ENCODE measurements at regions of chr19 and their contacts with region 1.

Region 1: GRCh38 chr19:45523642-45524256 is 16.5 kb downstream of the VASP start:
- DNase-seq: peak; percentile 74 to 86 (median 81)
- H3K4me3 ChIP-seq: no peak overlapping the region
- H3K27ac ChIP-seq: no peak overlapping the region
- H3K4me1 ChIP-seq: peaks cover 2% of the 10 kb centered on the region
- H3K27me3 ChIP-seq: no peaks in the 10 kb centered on the region
- CTCF ChIP-seq: peak; percentile 86 to 92 (median 91)
- EP300 ChIP-seq: no peak
- POLR2A ChIP-seq: no peak

Region 2: GRCh38 chr19:45276284-45276687 is 247.5 kb before region 1 on chr19:
- intact Hi-C with region 1: no loop called
- DNase-seq: peak; percentile 42 to 78 (median 67)
- H3K4me3 ChIP-seq: no peak overlapping the region
- H3K27ac ChIP-seq: peak overlapping the region in 1 of 2 donors; percentile 55
- H3K4me1 ChIP-seq: peaks cover 3% of the 10 kb centered on the region
- H3K27me3 ChIP-seq: no peaks in the 10 kb centered on the region
- CTCF ChIP-seq: no peak
- EP300 ChIP-seq: no peak
- POLR2A ChIP-seq: no peak

Region 3: DNA sequence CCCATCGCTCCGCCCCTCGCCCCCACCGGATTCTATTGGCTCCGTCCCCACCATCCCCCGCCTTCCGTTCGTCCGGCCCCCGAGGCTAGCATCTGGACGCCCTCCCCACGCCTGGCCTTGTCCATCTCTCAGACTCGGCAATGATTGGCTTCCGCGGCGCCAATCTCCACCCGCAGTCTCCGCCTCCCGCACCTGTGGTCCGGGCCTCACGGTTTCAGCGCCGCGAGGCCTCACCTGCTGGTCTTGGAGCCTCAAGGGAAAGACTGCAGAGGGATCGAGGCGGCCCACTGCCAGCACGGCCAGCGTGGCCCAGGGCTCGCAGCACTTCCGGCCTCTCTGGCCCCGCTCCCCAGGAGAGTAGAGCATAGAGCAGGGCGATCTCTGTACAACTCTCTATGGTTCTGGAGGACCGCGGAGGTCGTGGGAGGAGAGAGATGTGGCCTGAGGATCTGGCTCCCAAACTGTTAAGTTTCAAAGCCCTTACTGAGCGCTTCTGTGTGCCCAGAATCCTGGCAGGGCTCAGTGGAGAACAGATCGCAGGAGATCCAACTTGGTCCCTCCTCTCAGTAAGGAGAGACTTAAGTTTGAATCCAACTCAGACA is 100.1 kb before region 1 on chr19 and contains the start of gene ERCC1:
- intact Hi-C with region 1: no loop called
- DNase-seq: peak in 4 of 5 donors; percentile 96 to 98 (median 96)
- H3K4me3 ChIP-seq: peak within 1 kb of the TSS; percentile 63
- H3K27ac ChIP-seq: peak within 1 kb of the TSS; percentile 42 to 87
- H3K4me1 ChIP-seq: peaks cover 10% of the 10 kb centered on the region
- H3K27me3 ChIP-seq: no peaks in the 10 kb centered on the region
- CTCF ChIP-seq: no peak
- EP300 ChIP-seq: no peak
- POLR2A ChIP-seq: peak; percentile 69
- total RNA-seq, gene ERCC1: 70.7 to 98.6 (median 83.9) TPM

Region 4: DNA sequence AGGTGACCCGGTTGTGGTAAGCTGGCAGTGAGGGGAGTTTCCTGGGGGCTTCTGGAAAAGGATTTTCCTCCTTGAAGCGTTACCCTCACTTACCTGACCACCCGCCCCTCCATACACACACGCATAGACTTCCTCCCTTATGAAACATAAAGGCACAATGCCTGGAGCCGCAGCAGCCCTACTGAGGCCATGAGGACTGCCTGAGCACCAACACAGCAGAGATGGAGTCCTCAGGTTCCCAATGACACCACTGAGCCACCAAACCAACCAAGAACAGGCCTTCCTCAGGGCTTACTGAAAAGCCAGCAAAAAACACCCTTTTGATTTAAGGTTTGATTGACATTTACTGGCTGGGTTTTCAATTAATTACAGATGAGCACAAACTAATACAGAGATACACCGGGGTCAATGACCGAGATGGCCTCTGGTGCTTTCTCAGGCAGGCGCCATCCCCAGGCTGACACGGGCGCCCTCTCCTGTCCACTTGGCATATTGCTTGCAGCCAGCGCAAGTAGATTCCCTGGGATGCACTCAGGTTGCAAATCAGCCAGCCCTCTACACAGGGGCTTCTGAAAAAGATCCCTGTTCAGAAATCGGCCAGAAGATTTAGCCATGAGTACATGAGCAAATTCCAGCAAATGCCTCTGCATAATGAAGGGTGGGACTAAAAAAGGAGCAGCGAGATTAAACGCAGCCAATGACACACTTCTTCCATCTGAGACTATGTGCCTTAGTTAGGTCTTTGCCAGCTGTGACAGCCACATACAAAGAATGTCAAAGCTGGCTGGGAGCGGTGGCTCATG is 46.1 kb after region 1 on chr19:
- intact Hi-C with region 1: loop called in 1 of 4 experiments (anchors 10 kb)
- DNase-seq: no peak
- H3K4me3 ChIP-seq: no peak overlapping the region
- H3K27ac ChIP-seq: no peak overlapping the region
- H3K4me1 ChIP-seq: no peaks in the 10 kb centered on the region
- H3K27me3 ChIP-seq: no peaks in the 10 kb centered on the region
- CTCF ChIP-seq: no peak
- EP300 ChIP-seq: no peak
- POLR2A ChIP-seq: no peak

Region 5: DNA sequence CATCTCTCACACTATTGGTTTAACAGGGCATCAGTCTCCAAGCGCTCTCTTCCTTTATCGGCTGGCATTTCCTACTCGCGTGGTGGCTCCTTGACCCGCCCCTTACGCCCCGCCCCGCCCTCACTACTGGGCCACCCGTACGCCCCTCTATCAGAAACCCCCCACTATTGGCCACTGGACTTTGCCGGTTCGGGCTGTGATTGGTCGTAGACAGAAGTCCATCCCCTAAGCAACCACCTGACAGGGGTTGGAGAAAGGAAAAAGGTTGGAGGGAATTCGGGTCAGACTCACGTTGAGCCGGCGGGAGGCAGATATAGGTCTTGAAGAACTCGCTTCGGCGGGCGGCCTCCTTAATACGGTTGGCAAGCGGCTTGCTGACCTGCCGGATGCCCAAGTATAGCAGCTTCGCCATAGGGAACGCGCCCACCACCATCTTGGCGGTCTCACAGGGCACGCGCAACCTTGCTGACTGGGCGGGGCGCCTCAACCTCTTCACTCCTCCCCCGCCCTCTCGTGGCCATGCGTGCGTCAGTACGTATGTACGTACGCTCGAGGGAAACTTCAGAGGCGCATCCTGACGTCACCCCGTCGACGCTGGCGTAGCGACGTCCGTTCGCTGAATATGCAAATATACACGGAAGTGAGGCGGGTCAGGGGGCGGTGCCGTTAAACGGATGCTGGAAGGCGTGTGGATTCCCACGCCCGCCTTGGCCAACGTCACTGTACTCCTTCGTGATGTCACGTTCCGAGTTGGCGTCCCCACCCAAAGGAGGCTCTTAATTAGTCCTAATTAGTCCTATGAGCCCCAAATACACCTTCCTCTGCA is 60.8 kb after region 1 on chr19 and contains the start of gene OPA3:
- intact Hi-C with region 1: loop called in 2 of 4 experiments (anchors 10 kb)
- DNase-seq: peak; percentile 99 to 100 (median 100)
- H3K4me3 ChIP-seq: peak within 1 kb of the TSS; percentile 79
- H3K27ac ChIP-seq: peak within 1 kb of the TSS; percentile 93 to 100
- H3K4me1 ChIP-seq: peaks cover 4% of the 10 kb centered on the region
- H3K27me3 ChIP-seq: no peaks in the 10 kb centered on the region
- CTCF ChIP-seq: peak in 2 of 3 donors; percentile 7 to 43
- EP300 ChIP-seq: peak; percentile 98
- POLR2A ChIP-seq: peak; percentile 82
- total RNA-seq, gene OPA3: 2.0 to 16.6 (median 12.3) TPM

Region 6: GRCh38 chr19:45643024-45643926 is 119.5 kb after region 1 on chr19:
- intact Hi-C with region 1: loop called in 3 of 4 experiments (anchors 2 to 5 kb)
- DNase-seq: peak; percentile 65 to 89 (median 79)
- H3K4me3 ChIP-seq: no peak overlapping the region
- H3K27ac ChIP-seq: no peak overlapping the region
- H3K4me1 ChIP-seq: peaks cover 4% of the 10 kb centered on the region
- H3K27me3 ChIP-seq: peaks cover 3% of the 10 kb centered on the region
- CTCF ChIP-seq: peak; percentile 84 to 94 (median 89)
- EP300 ChIP-seq: no peak
- POLR2A ChIP-seq: no peak

Region 7: DNA sequence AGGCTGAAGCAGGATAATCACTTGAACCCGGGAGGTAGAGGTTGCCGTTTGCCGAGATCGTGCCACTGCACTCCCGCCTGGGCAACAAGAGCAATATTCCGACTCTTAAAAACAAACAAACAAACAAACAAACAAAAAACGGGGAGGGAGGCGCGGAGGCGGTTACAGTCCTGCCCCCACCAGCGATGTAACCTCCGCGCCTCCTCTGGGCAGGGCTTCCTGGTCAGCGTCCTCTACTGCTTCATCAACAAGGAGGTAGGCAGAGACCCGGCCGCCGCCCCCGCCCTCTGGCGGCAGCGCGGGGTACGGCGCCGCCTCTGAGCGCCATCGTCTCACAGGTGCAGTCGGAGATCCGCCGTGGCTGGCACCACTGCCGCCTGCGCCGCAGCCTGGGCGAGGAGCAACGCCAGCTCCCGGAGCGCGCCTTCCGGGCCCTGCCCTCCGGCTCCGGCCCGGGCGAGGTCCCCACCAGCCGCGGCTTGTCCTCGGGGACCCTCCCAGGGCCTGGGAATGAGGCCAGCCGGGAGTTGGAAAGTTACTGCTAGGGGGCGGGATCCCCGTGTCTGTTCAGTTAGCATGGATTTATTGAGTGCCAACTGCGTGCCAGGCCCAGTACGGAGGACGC is 157.8 kb after region 1 on chr19:
- intact Hi-C with region 1: loop called in 1 of 4 experiments (anchors 5 kb)
- DNase-seq: peak; percentile 71 to 85 (median 81)
- H3K4me3 ChIP-seq: peak overlapping the region; percentile 32
- H3K27ac ChIP-seq: peak overlapping the region; percentile 7 to 19
- H3K4me1 ChIP-seq: peaks cover 3% of the 10 kb centered on the region
- H3K27me3 ChIP-seq: peaks cover 7% of the 10 kb centered on the region
- CTCF ChIP-seq: peak; percentile 92 to 95 (median 93)
- EP300 ChIP-seq: no peak
- POLR2A ChIP-seq: no peak

Region 8: DNA sequence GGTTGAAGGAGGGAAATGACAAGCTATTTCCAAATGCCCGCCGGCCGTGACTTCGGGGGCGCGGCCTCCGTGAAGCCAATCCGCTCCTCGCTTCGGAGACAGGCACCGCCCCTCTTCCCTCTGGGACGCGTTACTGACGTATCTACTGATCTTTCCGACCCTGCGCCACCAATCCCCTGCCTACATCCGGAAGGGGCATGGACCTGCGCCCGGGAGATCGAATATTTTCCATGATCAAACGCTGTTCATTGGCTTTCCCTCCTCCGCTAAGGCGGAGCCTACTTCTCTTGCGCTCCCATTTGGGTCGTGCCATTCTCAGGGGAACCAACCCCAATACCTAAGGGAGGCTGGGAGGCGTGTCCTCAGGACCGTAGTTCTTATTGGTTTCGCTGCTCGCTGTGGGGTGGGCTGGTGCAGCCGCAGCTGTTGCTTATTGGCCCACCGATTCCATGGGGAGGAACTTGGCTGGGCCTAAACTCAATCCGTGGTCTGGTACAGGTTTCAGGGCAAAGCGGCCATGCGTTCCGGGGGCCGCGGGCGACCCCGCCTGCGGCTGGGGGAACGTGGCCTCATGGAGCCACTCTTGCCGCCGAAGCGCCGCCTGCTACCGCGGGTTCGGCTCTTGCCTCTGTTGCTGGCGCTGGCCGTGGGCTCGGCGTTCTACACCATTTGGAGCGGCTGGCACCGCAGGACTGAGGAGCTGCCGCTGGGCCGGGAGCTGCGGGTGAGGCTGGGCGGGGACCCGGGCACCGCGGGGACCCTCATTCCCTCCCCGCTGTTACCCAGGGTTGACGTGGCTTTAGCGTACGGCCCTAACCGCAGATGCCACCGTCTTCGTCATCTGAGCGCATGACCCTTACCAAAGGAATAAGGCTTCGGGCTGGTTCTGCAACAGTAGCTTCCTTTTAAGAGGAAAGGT is 168.7 kb after region 1 on chr19 and contains the start of gene QPCTL:
- intact Hi-C with region 1: loop called in 1 of 4 experiments (anchors 5 kb)
- DNase-seq: peak; percentile 90 to 95 (median 93)
- H3K4me3 ChIP-seq: peak within 1 kb of the TSS; percentile 57
- H3K27ac ChIP-seq: peak within 1 kb of the TSS; percentile 7 to 88
- H3K4me1 ChIP-seq: peaks cover 3% of the 10 kb centered on the region
- H3K27me3 ChIP-seq: no peaks in the 10 kb centered on the region
- CTCF ChIP-seq: no peak
- EP300 ChIP-seq: no peak
- POLR2A ChIP-seq: no peak
- total RNA-seq, gene QPCTL: 4.2 to 15.3 (median 7.3) TPM

Measured in ovary (tissue), 10 donors.